ENCODE measurements at regions of chr7 and their contacts with region 1.

Region 1: GRCh38 chr7:28383975-28384374 is 28.3 kb upstream of the CREB5 start:
- DNase-seq: peak; percentile 12
- H3K4me3 ChIP-seq: no peak overlapping the region
- H3K27ac ChIP-seq: no peak overlapping the region
- H3K4me1 ChIP-seq: peaks cover 6 to 15% (median 14%) of the 10 kb centered on the region in 4 donors
- H3K27me3 ChIP-seq: no peaks in the 10 kb centered on the region
- CTCF ChIP-seq: no peak
- EP300 ChIP-seq: no peak
- POLR2A ChIP-seq: no peak

Region 2: GRCh38 chr7:28062197-28062991 is 321.6 kb before region 1 on chr7:
- intact Hi-C with region 1: no loop called
- DNase-seq: no peak
- H3K4me3 ChIP-seq: no peak overlapping the region
- H3K27ac ChIP-seq: no peak overlapping the region
- H3K4me1 ChIP-seq: peaks cover 5 to 58% (median 50%) of the 10 kb centered on the region in 4 donors
- H3K27me3 ChIP-seq: no peaks in the 10 kb centered on the region
- CTCF ChIP-seq: peak; percentile 64 to 75 (median 70)
- EP300 ChIP-seq: no peak
- POLR2A ChIP-seq: no peak

Region 3: GRCh38 chr7:28298870-28299518 is 85.0 kb before region 1 on chr7:
- intact Hi-C with region 1: loop called (anchors 5 kb)
- DNase-seq: no peak
- H3K4me3 ChIP-seq: no peak overlapping the region
- H3K27ac ChIP-seq: no peak overlapping the region
- H3K4me1 ChIP-seq: peaks cover 0 to 6% (median 0%) of the 10 kb centered on the region in 4 donors
- H3K27me3 ChIP-seq: no peaks in the 10 kb centered on the region
- CTCF ChIP-seq: peak; percentile 49 to 62 (median 59)
- EP300 ChIP-seq: no peak
- POLR2A ChIP-seq: no peak

Region 4: DNA sequence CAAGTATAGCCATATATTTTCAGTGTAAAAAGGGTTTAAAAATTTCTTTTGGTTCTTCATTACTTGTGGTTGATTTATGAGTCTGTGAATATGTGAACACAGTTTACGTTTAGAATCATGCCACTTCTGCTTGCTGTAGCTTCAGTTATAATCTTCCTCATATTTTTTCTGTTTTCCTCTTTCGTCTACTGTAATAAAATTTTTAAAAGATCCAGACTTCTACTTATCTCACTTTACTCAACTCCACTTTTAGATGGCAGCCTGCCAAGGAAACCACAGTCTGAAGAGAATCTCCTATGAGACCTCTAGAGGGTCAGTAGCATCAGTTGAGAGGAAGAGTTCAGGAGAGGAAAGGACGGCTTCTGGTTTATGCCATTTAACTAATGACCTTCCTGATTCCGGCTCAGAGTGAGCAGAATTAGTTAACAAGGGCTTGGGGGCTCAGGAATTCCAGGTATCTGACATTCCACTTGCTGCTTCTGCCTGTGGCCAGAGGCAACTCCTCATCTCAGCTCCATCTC is 49.8 kb after region 1 on chr7:
- intact Hi-C with region 1: no loop called
- DNase-seq: no peak
- H3K4me3 ChIP-seq: no peak overlapping the region
- H3K27ac ChIP-seq: no peak overlapping the region
- H3K4me1 ChIP-seq: peaks cover 0 to 20% (median 13%) of the 10 kb centered on the region in 4 donors
- H3K27me3 ChIP-seq: no peaks in the 10 kb centered on the region
- CTCF ChIP-seq: no peak
- EP300 ChIP-seq: no peak
- POLR2A ChIP-seq: no peak